Tibial artery (tissue), 4 donors: ENCODE measurements at regions of chr3 and their contacts with region 1.

Region 1: DNA sequence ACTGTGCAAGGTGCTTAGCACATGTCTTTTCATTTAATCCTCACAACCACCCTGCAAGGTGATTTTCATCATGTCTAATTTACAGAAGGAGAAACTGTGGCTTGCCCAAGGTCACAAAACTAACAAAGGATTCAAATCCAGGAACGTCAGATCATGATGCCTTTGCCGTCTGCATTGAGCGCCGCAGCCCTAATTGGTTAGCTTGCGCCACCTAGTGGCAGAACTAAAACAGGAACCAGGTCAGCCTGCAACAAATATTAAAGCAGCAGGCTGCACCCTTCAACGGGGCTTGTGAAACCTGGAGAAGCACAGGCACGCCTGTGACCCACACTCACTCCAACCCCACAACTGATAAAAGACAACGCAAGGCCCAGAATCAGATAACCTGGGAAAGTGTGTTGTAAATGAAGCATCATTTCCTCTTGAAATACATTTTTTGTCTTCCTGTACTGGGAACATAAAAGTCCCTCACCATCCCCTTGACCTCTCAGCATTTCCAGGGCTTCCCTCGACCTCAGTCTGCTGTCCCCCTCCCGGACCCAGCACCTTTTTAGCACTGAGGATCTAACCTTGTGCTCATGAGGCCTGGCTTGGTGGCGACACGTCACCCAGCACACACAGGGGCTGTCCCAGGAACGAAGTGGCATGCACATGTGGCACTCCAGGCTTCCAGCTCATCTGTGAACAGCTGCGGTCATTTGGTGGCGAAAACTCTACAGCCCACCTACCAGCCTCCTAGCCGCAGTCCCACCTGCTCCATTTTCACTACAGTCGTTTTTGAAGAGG is 17.3 kb downstream of the DPH3 start:
- DNase-seq: peak; percentile 83 to 88
- H3K4me3 ChIP-seq: no peak overlapping the region
- H3K27ac ChIP-seq: no peak overlapping the region
- H3K4me1 ChIP-seq: peaks cover 0 to 33% (median 6%) of the 10 kb centered on the region in 4 donors
- H3K27me3 ChIP-seq: no peaks in the 10 kb centered on the region
- CTCF ChIP-seq: peak; percentile 88 to 94

Region 2: GRCh38 chr3:14672588-14672987 is 1574.9 kb before region 1 on chr3:
- intact Hi-C with region 1: no loop called
- DNase-seq: no peak
- H3K4me3 ChIP-seq: no peak overlapping the region
- H3K27ac ChIP-seq: no peak overlapping the region
- H3K4me1 ChIP-seq: no peaks in the 10 kb centered on the region
- H3K27me3 ChIP-seq: no peaks in the 10 kb centered on the region
- CTCF ChIP-seq: no peak

Region 3: GRCh38 chr3:15629860-15630597 is 617.4 kb before region 1 on chr3:
- intact Hi-C with region 1: loop called (anchors 10 kb)
- DNase-seq: peak in 1 of 2 donors; percentile 71
- H3K4me3 ChIP-seq: peak overlapping the region; percentile 26 to 31
- H3K27ac ChIP-seq: peak overlapping the region; percentile 23 to 42
- H3K4me1 ChIP-seq: peaks cover 0 to 31% (median 12%) of the 10 kb centered on the region in 4 donors
- H3K27me3 ChIP-seq: no peaks in the 10 kb centered on the region
- CTCF ChIP-seq: peak; percentile 80 to 84

Region 4: GRCh38 chr3:15815696-15816095 is 431.8 kb before region 1 on chr3:
- intact Hi-C with region 1: loop called (anchors 5 kb)
- DNase-seq: no peak
- H3K4me3 ChIP-seq: no peak overlapping the region
- H3K27ac ChIP-seq: no peak overlapping the region
- H3K4me1 ChIP-seq: peaks cover 0 to 13% (median 0%) of the 10 kb centered on the region in 4 donors
- H3K27me3 ChIP-seq: no peaks in the 10 kb centered on the region
- CTCF ChIP-seq: peak; percentile 50

Region 5: DNA sequence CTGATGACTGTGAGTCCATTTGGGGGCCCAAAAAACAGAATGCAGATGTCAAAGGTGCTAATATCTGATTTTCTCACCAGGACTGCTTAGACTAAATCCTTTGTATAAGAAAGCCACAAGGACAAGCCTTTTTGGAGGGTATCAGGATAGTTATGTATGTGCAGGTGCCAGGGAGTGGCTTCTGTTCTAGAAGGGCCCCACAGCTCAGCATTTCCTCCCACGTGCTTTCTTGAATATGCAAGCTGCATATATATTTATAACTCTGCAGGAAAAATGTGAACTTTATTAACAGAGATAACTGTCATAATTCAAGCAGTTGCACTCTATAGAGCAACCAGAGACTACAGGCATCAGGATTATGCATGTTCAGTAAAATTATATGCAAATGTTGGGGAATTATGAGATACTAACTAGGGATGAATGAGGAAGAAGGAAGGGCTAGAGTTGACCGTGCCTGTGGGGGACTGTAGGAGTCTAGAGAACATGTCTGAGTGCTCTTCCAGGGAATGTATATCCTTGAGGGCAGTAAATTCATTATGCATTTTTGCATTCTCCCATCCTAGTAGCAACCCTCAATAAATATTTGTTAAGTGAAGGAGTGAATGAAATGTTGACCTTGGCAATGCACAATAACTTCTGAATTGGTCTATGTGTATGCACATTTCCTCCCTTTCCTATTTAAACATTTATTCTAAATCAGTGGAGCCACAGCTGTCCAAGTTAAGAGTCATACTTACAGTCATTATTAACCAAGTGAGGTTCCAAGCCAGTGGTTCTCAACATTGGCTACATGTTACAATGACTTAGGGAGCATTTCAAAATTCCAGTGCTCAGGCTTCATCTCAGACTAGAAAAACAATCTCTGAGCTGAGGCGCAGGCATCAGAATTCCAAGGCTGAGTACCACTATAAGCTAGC is 354.9 kb before region 1 on chr3:
- intact Hi-C with region 1: no loop called
- DNase-seq: no peak
- H3K4me3 ChIP-seq: no peak overlapping the region
- H3K27ac ChIP-seq: peak overlapping the region in 1 of 2 donors; percentile 62
- H3K4me1 ChIP-seq: peaks cover 4 to 26% (median 10%) of the 10 kb centered on the region in 4 donors
- H3K27me3 ChIP-seq: no peaks in the 10 kb centered on the region
- CTCF ChIP-seq: no peak

Region 6: GRCh38 chr3:16183601-16184270 is 63.7 kb before region 1 on chr3:
- intact Hi-C with region 1: loop called (anchors 5 kb)
- DNase-seq: peak in 1 of 2 donors; percentile 38
- H3K4me3 ChIP-seq: no peak overlapping the region
- H3K27ac ChIP-seq: no peak overlapping the region
- H3K4me1 ChIP-seq: peaks cover 0 to 20% (median 1%) of the 10 kb centered on the region in 4 donors
- H3K27me3 ChIP-seq: no peaks in the 10 kb centered on the region
- CTCF ChIP-seq: no peak

Region 7: DNA sequence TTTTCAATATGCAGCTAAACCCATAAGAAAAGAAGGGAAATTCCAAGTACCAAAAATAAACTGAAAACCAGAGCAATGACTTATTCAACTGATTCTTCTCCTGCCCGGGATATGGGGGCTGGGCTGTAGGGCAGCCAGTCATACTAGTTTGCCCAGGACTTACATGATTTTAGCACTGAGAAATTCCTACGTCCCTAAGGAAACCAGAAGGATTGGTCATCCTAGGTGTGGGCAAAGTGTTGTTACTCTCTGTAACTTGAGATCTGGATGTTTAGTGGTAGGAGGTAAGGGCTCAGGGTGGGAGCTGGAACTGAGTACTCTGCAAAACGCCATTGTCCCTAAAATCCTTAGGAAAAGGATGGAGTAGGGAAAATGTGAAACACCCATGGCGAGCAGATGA is 358.9 kb after region 1 on chr3:
- intact Hi-C with region 1: no loop called
- DNase-seq: no peak
- H3K4me3 ChIP-seq: no peak overlapping the region
- H3K27ac ChIP-seq: no peak overlapping the region
- H3K4me1 ChIP-seq: no peaks in the 10 kb centered on the region
- H3K27me3 ChIP-seq: no peaks in the 10 kb centered on the region
- CTCF ChIP-seq: no peak